HepG2 (cell line): ENCODE measurements at regions of chr1 and their contacts with region 1.

Region 1: GRCh38 chr1:226634166-226634588 is 85.6 kb downstream of the STUM start:
- DNase-seq: peak; percentile 35
- ATAC-seq: peak; percentile 90
- H3K4me3 ChIP-seq: no peak overlapping the region
- H3K27ac ChIP-seq: no peak overlapping the region
- H3K4me1 ChIP-seq: no peaks in the 10 kb centered on the region
- H3K27me3 ChIP-seq: peaks cover 0 to 57% of the 10 kb centered on the region in 2 experiments; a peak in 4 of 5 replicates
- CTCF ChIP-seq: peak; percentile 88
- EP300 ChIP-seq: no peak
- POLR2A ChIP-seq: no peak
- RAD21 ChIP-seq: peak; percentile 71

Region 2: GRCh38 chr1:226424228-226425003 is 209.8 kb before region 1 on chr1:
- CTCF ChIA-PET with region 1: no interaction called
- POLR2A ChIA-PET with region 1: no interaction called
- in situ Hi-C with region 1: no loop called
- intact Hi-C with region 1: no loop called
- DNase-seq: no peak
- ATAC-seq: peak; percentile 88
- H3K4me3 ChIP-seq: no peak overlapping the region
- H3K27ac ChIP-seq: no peak overlapping the region
- H3K4me1 ChIP-seq: no peaks in the 10 kb centered on the region
- H3K27me3 ChIP-seq: peaks cover 2 to 3% of the 10 kb centered on the region in 2 experiments; a peak in 1 of 5 replicates
- CTCF ChIP-seq: peak; percentile 75
- EP300 ChIP-seq: no peak
- POLR2A ChIP-seq: no peak
- RAD21 ChIP-seq: no peak

Region 3: GRCh38 chr1:226664413-226665101 is 30.4 kb after region 1 on chr1:
- CTCF ChIA-PET with region 1: no interaction called
- POLR2A ChIA-PET with region 1: no interaction called
- in situ Hi-C with region 1: no loop called
- intact Hi-C with region 1: loop called (anchors 2 kb)
- DNase-seq: no peak
- ATAC-seq: no peak
- H3K4me3 ChIP-seq: no peak overlapping the region
- H3K27ac ChIP-seq: no peak overlapping the region
- H3K4me1 ChIP-seq: no peaks in the 10 kb centered on the region
- H3K27me3 ChIP-seq: peaks cover 3 to 70% of the 10 kb centered on the region in 2 experiments; a peak in 4 of 5 replicates
- CTCF ChIP-seq: no peak
- EP300 ChIP-seq: no peak
- POLR2A ChIP-seq: no peak
- RAD21 ChIP-seq: no peak

Region 4: GRCh38 chr1:226827968-226828513 is 193.9 kb after region 1 on chr1:
- CTCF ChIA-PET with region 1: interaction called, 20 read pairs
- POLR2A ChIA-PET with region 1: no interaction called
- in situ Hi-C with region 1: loop called (anchors 5 kb)
- intact Hi-C with region 1: no loop called
- DNase-seq: peak; percentile 64
- ATAC-seq: peak; percentile 97
- H3K4me3 ChIP-seq: no peak overlapping the region
- H3K27ac ChIP-seq: no peak overlapping the region
- H3K4me1 ChIP-seq: no peaks in the 10 kb centered on the region
- H3K27me3 ChIP-seq: peaks cover 2 to 39% of the 10 kb centered on the region in 2 experiments; a peak in 2 of 5 replicates
- CTCF ChIP-seq: peak; percentile 87
- EP300 ChIP-seq: no peak
- POLR2A ChIP-seq: no peak
- RAD21 ChIP-seq: peak; percentile 85